Activated B cell treated with CpG ODN at 0.5 μM for 24 hours (primary cell): ENCODE measurements at regions of chr1 and their contacts with region 1.

Region 1: GRCh38 chr1:115112496-115113375 is 23.4 kb upstream of the TSPAN2 start:
- DNase-seq: peak; percentile 45
- ATAC-seq: peak; percentile 40
- H3K4me3 Mint-ChIP-seq: no peak overlapping the region
- H3K27ac Mint-ChIP-seq: no peak overlapping the region
- H3K4me1 Mint-ChIP-seq: no peaks in the 10 kb centered on the region
- H3K27me3 Mint-ChIP-seq: no peaks in the 10 kb centered on the region
- CTCF ChIP-seq: peak; percentile 75

Region 2: GRCh38 chr1:114979278-114979891 is 133.4 kb before region 1 on chr1:
- CTCF ChIA-PET with region 1: interaction called, 67 read pairs
- POLR2A ChIA-PET with region 1: no interaction called
- intact Hi-C with region 1: loop called (anchors 1 kb)
- DNase-seq: no peak
- ATAC-seq: no peak
- H3K4me3 Mint-ChIP-seq: no peak overlapping the region
- H3K27ac Mint-ChIP-seq: no peak overlapping the region
- H3K4me1 Mint-ChIP-seq: no peaks in the 10 kb centered on the region
- H3K27me3 Mint-ChIP-seq: peaks cover 27% of the 10 kb centered on the region
- CTCF ChIP-seq: no peak

Region 3: DNA sequence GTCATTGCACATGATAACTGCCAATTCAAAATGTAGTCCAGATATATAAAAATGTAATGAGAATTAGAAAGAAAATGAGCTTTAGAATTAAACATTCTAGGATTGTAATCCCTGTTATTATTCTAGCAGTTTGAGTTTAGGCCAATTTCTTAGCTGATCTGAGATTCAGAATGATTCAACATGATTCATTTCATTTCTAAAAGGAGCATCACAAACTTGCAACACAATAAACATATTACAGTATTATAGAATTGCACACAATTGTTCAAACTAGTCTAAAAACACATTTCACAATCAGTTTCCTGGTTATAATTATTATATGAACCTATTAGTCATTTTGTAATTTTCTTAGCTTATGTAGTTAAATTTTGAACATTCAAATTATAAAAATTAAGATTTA is 126.5 kb before region 1 on chr1:
- CTCF ChIA-PET with region 1: interaction called, 67 read pairs
- POLR2A ChIA-PET with region 1: no interaction called
- intact Hi-C with region 1: no loop called
- DNase-seq: no peak
- ATAC-seq: no peak
- H3K4me3 Mint-ChIP-seq: no peak overlapping the region
- H3K27ac Mint-ChIP-seq: no peak overlapping the region
- H3K4me1 Mint-ChIP-seq: no peaks in the 10 kb centered on the region
- H3K27me3 Mint-ChIP-seq: peaks cover 11% of the 10 kb centered on the region
- CTCF ChIP-seq: no peak

Region 4: GRCh38 chr1:115041654-115042053 is 71.1 kb before region 1 on chr1:
- CTCF ChIA-PET with region 1: no interaction called
- POLR2A ChIA-PET with region 1: no interaction called
- intact Hi-C with region 1: no loop called
- DNase-seq: no peak
- ATAC-seq: no peak
- H3K4me3 Mint-ChIP-seq: no peak overlapping the region
- H3K27ac Mint-ChIP-seq: no peak overlapping the region
- H3K4me1 Mint-ChIP-seq: no peaks in the 10 kb centered on the region
- H3K27me3 Mint-ChIP-seq: no peaks in the 10 kb centered on the region
- CTCF ChIP-seq: no peak

Region 5: DNA sequence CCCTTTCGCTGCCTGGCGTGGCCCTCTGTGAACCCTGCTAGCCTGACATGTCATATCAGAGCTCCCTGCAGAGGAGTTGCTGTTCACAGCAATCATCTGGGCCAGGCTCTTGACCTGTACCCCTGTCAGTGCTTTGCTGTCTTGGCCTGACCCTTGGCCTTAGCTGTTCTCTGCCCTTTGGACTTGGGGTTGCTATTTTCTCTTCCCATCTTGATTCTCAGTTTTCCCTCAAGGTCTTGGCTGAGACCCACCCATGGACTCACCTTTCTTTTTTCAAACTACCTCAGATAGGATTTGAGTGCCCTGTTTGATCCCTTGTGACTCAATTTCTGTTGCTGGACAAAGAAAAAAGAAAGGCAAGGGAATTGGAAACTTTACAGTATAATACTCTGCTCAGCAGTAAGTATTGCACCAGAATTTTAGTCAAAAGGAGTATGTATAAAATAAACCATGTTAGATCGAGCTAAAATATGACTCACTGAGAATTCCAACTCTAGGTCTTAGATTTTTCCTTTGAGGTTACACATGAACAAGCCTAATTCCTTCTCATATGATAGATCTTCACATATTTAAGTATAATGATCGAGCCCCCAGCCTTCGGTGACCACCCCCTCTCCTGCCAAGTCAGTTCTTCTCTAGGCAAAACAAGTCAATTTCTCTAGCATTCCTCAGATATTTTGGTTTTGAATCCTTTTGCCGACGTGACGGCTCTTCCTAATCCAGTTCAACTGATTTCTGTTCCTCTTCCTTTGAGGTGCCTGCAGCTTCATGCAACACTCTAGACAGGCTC is 114.8 kb after region 1 on chr1:
- CTCF ChIA-PET with region 1: no interaction called
- POLR2A ChIA-PET with region 1: no interaction called
- intact Hi-C with region 1: no loop called
- DNase-seq: no peak
- ATAC-seq: no peak
- H3K4me3 Mint-ChIP-seq: no peak overlapping the region
- H3K27ac Mint-ChIP-seq: no peak overlapping the region
- H3K4me1 Mint-ChIP-seq: no peaks in the 10 kb centered on the region
- H3K27me3 Mint-ChIP-seq: no peaks in the 10 kb centered on the region
- CTCF ChIP-seq: no peak